Activated B cell treated with CpG ODN at 0.5 μM for 24 hours (primary cell): ENCODE measurements at regions of chr16 and their contacts with region 1.

Region 1: DNA sequence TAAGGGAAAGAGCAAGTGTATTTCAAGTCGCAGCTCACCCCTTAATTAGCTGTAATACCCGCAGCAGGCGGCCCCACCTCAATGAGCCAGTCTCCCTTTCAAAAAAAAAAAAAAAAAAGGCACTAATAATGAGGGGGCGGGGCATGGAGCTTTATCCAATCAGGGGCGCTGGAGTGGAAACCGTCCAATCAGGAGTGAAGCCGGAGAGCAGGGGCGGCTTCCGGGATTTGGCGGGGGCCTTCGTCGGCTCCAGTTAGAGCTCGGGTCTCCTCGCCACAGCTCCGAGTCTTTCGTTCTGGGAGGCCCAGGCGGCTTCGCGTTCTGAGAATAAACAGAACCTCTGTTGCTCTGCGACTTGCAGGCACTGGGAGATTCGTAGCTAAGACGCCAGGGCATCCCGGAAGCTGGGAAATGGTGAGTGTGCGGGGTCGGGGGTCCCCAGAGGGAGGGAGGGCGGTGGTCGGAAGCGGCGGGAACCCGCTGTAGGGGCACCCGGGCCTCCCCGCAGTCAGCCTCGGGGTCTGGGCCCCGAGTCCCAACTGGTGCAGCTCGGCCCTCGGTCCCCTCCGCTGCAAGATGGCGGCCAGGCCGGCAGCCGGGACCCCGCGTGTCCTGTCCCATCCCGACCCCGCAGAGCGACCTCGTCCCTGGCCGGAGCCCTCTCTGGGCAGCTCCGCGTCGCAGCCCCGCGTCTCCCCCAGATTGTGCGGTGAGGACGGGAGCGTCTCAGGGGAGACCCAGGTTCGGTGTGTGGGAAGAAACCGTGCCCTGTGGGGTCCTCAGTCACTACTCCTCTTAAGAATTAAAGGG is at the start of gene ZNF267:
- DNase-seq: peak; percentile 79
- ATAC-seq: peak; percentile 69
- H3K4me3 Mint-ChIP-seq: peak within 1 kb of the TSS; percentile 83
- H3K27ac Mint-ChIP-seq: peak within 1 kb of the TSS; percentile 87
- H3K4me1 Mint-ChIP-seq: peaks cover 83% of the 10 kb centered on the region
- H3K27me3 Mint-ChIP-seq: no peaks in the 10 kb centered on the region
- CTCF ChIP-seq: no peak
- total RNA-seq, gene ZNF267: 93.5 and 99.0 TPM in 2 replicates

Region 2: GRCh38 chr16:30957456-30958174 is 916.1 kb before region 1 on chr16 and contains the start of gene SETD1A:
- CTCF ChIA-PET with region 1: no interaction called
- POLR2A ChIA-PET with region 1: interaction called, 4 read pairs
- intact Hi-C with region 1: loop called (anchors 10 kb)
- DNase-seq: peak; percentile 89
- ATAC-seq: peak; percentile 87
- H3K4me3 Mint-ChIP-seq: peak within 1 kb of the TSS; percentile 95
- H3K27ac Mint-ChIP-seq: peak within 1 kb of the TSS; percentile 99
- H3K4me1 Mint-ChIP-seq: peaks cover 31% of the 10 kb centered on the region
- H3K27me3 Mint-ChIP-seq: no peaks in the 10 kb centered on the region
- CTCF ChIP-seq: no peak
- total RNA-seq, gene SETD1A: 29.6 and 32.8 TPM in 2 replicates

Region 3: DNA sequence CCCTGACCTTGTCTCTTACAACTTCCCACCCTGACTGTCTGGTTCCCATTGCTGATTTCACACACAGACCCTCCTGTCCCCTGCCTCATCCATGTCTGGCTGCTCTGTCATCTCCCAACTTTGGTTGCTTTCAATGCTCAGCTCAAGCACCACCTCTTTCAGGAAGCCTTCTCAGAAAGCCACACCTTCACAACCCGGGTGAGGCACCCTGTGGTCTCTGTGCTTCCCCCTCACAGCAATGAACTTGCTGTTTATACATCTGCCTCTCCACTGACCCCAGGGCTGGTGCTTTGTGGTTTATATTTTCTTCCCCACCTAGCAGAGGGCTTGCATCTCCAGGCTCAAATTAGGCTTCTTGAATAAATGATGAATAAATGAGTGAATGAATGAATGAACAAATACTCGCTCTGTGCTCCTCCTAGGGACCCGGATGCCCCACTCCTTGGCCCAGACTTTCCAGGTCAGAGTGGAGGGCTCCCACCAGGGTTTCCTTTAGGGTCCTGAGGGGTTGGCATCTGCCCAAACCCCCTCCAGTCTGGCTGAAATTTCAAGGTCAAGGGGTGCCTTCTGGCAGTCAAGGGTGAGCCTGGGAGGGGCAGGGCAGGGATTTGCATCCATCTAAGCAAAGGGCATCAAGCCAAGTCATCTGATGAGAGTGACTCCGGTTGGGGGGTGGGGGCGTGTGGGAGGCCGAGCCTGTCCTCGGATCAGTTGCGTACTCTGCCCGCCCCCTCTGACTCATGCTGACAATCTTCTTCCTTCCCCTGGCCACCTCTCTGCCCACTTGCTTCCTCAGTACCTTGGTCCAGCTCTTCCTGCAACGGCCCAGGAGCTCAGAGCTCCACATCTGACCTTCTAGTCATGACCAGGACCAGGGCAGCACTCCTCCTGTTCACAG is 519.1 kb before region 1 on chr16 and contains the start of gene ITGAX:
- CTCF ChIA-PET with region 1: no interaction called
- POLR2A ChIA-PET with region 1: interaction called, 3 read pairs
- intact Hi-C with region 1: loop called (anchors 5 kb)
- DNase-seq: peak; percentile 42
- ATAC-seq: peak; percentile 72
- H3K4me3 Mint-ChIP-seq: peak within 1 kb of the TSS; percentile 78
- H3K27ac Mint-ChIP-seq: peak within 1 kb of the TSS; percentile 93
- H3K4me1 Mint-ChIP-seq: peaks cover 74% of the 10 kb centered on the region
- H3K27me3 Mint-ChIP-seq: no peaks in the 10 kb centered on the region
- CTCF ChIP-seq: no peak
- total RNA-seq, gene ITGAX: 81.9 and 100 TPM in 2 replicates

Region 4: GRCh38 chr16:31819386-31819785 is 54.4 kb before region 1 on chr16:
- CTCF ChIA-PET with region 1: no interaction called
- POLR2A ChIA-PET with region 1: no interaction called
- intact Hi-C with region 1: no loop called
- DNase-seq: no peak
- ATAC-seq: no peak
- H3K4me3 Mint-ChIP-seq: no peak overlapping the region
- H3K27ac Mint-ChIP-seq: no peak overlapping the region
- H3K4me1 Mint-ChIP-seq: no peaks in the 10 kb centered on the region
- H3K27me3 Mint-ChIP-seq: peaks cover 18% of the 10 kb centered on the region
- CTCF ChIP-seq: no peak

Region 5: DNA sequence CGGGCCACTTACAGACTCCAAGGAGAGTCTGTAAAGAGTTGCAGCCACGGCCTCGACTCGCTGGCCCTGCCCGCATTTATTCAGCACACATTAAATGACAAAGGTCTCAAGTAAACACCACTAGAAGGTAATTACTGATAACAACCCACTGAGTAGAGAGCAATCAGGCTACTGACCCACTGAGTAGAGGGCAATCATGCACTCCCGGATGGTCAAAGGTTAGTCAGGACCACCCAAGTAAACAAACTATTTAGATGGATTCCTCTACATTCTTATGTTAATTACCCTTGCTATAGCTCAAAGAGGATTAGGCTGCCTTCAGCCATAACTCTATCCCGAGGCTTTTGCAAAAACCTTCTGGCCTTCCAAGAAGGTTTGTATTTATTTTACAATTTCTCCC is 30.9 kb before region 1 on chr16:
- CTCF ChIA-PET with region 1: no interaction called
- POLR2A ChIA-PET with region 1: no interaction called
- intact Hi-C with region 1: no loop called
- DNase-seq: no peak
- ATAC-seq: no peak
- H3K4me3 Mint-ChIP-seq: no peak overlapping the region
- H3K27ac Mint-ChIP-seq: no peak overlapping the region
- H3K4me1 Mint-ChIP-seq: no peaks in the 10 kb centered on the region
- H3K27me3 Mint-ChIP-seq: peaks cover 19% of the 10 kb centered on the region
- CTCF ChIP-seq: no peak

Region 6: GRCh38 chr16:31916056-31916488 is 42.3 kb after region 1 on chr16:
- CTCF ChIA-PET with region 1: no interaction called
- POLR2A ChIA-PET with region 1: interaction called, 3 read pairs
- intact Hi-C with region 1: loop called (anchors 5 kb)
- DNase-seq: no peak
- ATAC-seq: no peak
- H3K4me3 Mint-ChIP-seq: no peak overlapping the region
- H3K27ac Mint-ChIP-seq: no peak overlapping the region
- H3K4me1 Mint-ChIP-seq: peaks cover 3% of the 10 kb centered on the region
- H3K27me3 Mint-ChIP-seq: no peaks in the 10 kb centered on the region
- CTCF ChIP-seq: no peak